ENCODE measurements at regions of chr19 and their contacts with region 1.

Region 1: DNA sequence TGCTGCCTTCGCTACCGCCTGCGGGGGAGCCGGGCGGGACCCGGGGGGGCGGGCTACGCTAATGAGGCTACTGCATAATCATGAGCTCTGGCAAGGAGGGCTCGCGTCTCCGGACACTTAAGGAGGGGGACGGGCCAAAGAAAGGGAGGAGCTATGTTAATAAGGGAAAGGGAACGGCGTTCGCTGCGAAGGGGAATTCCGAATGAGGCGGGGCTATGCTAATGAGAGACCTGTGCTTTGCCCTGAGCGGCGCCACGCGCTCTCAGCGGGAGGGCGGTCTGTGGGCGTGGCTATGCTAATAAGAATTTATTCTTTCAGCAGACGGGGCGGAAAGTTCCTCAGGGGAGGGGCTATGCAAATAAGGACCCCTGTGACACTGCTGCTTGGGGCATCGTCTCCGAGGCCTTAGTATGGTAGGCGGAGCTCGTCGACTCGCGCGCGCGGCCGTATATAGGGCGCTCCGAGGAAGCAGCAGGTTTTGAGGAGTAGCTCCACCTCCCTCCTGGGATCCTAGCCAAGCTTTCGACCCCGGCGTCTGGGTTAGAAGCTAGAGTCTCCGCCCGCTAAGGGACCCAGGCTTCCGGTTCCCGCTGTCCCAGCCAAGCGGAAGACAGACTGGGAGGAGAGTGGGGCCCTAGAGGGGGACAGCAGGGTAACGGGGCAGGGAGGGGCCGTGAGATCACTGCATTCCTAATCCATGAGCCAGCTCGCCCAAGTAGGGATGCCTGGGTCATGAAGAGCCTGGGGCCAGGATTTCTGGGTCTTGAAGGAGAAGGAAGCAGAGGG is at the start of gene RRAS:
- DNase-seq: peak; percentile 99 to 100
- ATAC-seq: peak; percentile 74 to 81 (median 76)
- H3K4me3 ChIP-seq: peak within 1 kb of the TSS; percentile 80
- H3K27ac ChIP-seq: peak within 1 kb of the TSS; percentile 98
- H3K4me1 ChIP-seq: peaks cover 35% of the 10 kb centered on the region
- H3K27me3 ChIP-seq: no peaks in the 10 kb centered on the region
- CTCF ChIP-seq: no peak
- total RNA-seq, gene RRAS: 22.6 to 57.0 (median 42.5) TPM

Region 2: DNA sequence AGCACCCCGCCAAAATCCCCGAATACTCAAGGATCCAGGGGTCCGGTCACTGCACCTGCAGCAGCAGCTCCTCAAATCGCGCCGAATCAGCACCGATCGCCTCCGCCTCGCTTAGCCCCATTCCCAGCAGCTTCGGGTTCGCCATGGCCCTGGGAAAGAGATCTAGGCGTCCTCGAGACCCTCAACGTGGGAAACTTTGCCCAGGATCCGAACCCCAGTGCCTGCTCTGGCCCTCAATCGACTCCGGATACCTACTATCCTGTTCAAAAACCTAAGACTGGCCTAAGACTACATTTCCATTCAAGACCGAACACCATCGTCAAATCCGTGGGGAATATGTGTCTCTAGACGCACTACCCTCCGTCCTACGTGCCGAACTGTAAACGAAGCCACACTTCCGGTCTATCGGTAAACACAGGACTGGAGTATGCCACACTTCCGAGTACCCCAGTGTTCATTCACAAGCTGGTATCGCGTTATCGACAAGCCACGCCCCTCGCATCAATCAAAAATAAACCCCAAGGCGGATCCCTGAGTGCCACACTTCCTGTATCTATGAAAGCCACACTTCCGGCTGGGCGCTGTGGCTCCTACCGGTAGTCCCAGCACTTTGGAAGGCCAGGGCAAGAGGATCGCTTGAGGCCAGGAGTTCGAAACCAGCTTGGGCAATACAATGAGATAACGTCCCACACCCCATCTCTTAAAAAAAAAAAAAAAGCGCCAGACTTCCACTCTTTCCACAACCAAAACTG is 188.7 kb before region 1 on chr19 and contains the start of gene PIH1D1:
- intact Hi-C with region 1: loop called in 1 of 2 experiments (anchors 5 kb)
- DNase-seq: peak; percentile 97 to 98
- ATAC-seq: peak; percentile 83 to 87 (median 85)
- H3K4me3 ChIP-seq: peak within 1 kb of the TSS; percentile 93
- H3K27ac ChIP-seq: peak within 1 kb of the TSS; percentile 94
- H3K4me1 ChIP-seq: peaks cover 18% of the 10 kb centered on the region
- H3K27me3 ChIP-seq: no peaks in the 10 kb centered on the region
- CTCF ChIP-seq: no peak
- total RNA-seq, gene PIH1D1: 37.2 to 60.1 (median 43.1) TPM

Region 3: DNA sequence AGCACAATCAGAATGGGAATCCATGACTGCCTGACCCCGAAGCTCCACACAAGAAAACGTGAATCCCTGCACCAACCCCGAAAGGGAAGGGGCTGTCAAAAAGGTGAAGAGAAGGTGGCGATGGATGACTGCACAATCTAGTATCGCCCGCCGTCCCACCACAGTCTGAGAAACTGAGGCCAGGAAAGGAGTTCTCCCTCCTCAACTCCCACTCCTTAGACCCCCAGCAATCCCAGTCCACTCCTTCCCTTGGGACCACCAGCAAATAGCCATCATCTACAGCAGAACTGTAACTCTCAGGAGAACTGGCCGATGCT is 60.4 kb before region 1 on chr19:
- intact Hi-C with region 1: no loop called
- DNase-seq: no peak
- ATAC-seq: peak; percentile 7 to 30 (median 20)
- H3K4me3 ChIP-seq: peak overlapping the region; percentile 88
- H3K27ac ChIP-seq: peak overlapping the region; percentile 80
- H3K4me1 ChIP-seq: peaks cover 30% of the 10 kb centered on the region
- H3K27me3 ChIP-seq: no peaks in the 10 kb centered on the region
- CTCF ChIP-seq: no peak

Region 4: DNA sequence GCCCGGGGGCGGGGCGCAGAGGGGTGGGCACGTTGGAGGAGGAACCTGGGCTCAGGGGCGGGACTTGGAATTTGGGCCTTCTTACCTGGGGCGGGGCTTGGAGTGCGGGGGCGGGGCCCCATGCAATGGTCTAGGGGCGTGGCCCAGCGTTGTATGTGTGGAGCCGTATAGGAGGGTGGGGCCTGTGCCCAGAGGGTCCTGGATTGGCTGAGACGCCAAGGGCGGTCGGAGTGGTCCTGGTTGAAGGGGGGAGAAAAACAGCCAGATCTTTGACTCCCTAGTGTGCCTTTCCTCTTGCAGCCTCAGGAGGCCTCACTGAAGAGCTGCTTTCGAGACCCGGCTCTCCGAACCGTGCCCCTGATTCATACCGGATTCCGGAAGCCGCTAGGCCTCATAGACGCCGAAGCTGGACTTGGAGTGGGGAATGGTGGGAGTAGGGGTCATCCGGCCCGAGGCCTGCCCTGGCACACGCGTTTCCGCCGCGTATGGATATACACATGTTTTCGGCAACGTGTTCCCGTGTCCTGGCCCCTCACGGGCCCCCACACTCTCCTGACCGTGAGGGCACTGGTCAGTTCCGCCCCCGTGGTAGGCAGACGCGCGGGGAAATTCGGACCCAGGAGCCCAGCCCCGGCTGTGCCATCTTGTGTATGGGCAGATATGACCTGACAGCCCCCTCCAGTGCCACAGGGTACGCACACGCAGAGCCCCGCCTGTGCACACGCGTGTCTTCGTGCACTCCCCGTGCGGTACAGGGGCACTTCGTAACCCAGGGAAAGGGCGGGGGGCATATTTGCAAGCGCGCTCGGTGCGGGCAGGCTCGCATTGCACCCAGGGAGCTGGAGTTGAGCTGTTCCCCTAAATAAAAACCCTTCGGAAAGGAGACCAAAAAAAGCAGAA is 50.0 kb before region 1 on chr19:
- intact Hi-C with region 1: loop called (anchors 5 kb)
- DNase-seq: peak; percentile 93 to 94
- ATAC-seq: peak; percentile 79 to 86 (median 84)
- H3K4me3 ChIP-seq: peak overlapping the region; percentile 78
- H3K27ac ChIP-seq: peak overlapping the region; percentile 93
- H3K4me1 ChIP-seq: peaks cover 16% of the 10 kb centered on the region
- H3K27me3 ChIP-seq: no peaks in the 10 kb centered on the region
- CTCF ChIP-seq: no peak

Measured in psoas muscle (tissue), 8 donors.